ENCODE measurements at regions of chr4 and their contacts with region 1.

Region 1: DNA sequence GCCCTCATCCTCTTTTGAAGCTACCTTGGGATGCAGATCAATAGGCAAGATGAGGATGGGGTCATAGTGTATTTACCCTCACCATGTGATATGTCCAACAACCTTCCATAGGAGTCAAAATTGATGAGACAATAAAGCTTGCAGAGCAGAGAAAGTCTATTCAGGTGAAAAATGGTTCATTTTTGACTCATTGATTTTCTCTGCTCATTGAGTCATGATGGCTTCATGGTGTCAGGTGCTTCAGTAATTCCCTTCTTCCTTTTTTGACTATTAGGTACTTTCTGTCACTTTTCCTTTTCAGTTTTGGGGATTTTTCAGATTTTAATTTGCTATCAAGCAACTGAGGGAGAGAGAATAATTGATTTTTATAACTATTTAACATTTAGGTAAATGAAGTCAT is 55.9 kb upstream of the IL2 start:
- DNase-seq: no peak
- H3K4me3 ChIP-seq: no peak overlapping the region
- H3K27ac ChIP-seq: no peak overlapping the region
- H3K4me1 ChIP-seq: no peaks in the 10 kb centered on the region
- CTCF ChIP-seq: no peak

Region 2: GRCh38 chr4:121321466-121321865 is 1191.0 kb before region 1 on chr4:
- CTCF ChIA-PET with region 1: no interaction called
- POLR2A ChIA-PET with region 1: no interaction called
- intact Hi-C with region 1: loop called (anchors 5 kb)
- DNase-seq: no peak
- H3K4me3 ChIP-seq: no peak overlapping the region
- H3K27ac ChIP-seq: no peak overlapping the region
- H3K4me1 ChIP-seq: no peaks in the 10 kb centered on the region
- CTCF ChIP-seq: no peak

Region 3: DNA sequence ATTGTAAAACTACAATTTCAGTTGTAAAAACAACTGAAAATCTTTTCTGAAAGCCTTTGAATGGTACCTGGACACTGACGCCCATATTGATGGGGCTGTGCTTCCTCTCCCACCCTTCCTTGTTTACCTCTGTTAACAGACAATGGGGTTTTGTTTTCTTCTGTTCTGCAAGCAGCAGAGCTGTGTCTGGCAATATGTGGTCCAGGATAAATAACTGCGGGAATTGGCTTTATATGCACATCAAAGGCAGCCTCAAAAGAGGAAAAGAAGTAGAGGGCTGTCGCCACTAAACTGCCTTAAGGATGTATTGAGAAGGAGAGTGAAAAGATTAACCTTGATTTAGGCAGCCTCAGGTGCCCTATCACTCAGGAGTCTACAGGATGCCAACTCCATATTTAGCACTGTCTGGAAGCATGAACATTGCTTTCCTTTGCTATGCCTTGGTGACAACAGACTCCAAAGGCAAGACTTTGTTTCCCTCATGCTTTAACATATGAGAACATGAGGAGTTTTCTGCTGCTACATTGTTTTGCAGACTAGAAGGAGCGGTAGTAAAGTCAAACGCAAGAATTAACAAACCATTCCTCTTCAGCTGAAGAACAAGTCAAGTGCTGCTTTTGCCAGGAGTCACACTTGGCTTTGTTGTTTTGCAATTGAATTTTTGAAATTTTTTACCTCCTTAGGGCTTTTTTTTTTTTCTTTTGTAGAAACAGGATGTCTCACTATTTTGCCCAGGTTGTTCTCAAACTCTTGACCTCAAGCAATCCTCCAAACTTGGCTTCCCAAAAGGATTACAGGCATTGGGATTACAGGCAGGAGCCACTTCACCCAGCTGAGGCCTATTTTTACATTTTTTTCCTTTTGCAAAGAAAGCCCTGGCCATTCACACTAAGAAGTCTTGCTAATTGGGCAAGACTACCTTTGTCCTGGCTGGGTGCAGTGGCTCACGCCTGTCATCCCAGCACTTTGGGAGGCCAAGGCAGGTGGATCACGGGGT is 105.5 kb after region 1 on chr4:
- CTCF ChIA-PET with region 1: no interaction called
- POLR2A ChIA-PET with region 1: no interaction called
- intact Hi-C with region 1: no loop called
- DNase-seq: no peak
- H3K4me3 ChIP-seq: no peak overlapping the region
- H3K27ac ChIP-seq: no peak overlapping the region
- H3K4me1 ChIP-seq: no peaks in the 10 kb centered on the region
- CTCF ChIP-seq: no peak